Endothelial cell of umbilical vein (primary cell): ENCODE measurements at regions of chr19 and their contacts with region 1.

Region 1: DNA sequence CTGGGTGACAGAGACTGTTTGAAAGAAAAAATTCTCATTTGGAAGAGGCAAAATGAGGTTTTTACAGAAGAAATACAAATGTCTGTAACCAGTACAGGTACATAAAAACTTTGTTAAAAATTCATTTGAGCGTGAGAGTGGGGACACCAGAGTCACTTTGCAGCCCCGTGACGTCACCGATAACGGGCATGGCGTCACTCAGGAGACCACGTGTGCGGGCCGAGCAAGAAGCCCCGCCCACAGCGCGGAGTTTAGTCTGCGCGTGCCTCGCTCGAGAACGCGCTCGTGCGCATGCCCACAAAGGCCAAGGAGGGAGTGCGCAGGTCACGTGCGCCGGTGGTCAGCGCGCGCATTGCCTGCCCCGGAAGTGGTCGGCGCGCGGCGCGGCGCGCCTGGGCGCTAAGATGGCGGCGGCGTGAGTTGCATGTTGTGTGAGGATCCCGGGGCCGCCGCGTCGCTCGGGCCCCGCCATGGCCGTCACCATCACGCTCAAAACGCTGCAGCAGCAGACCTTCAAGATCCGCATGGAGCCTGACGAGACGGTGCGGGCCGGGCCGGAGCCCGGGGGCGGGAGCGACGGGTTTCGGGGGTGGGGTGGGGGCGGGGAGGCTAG is at the start of gene RAD23A:
- DNase-seq: peak; percentile 99
- H3K4me3 ChIP-seq: peak within 1 kb of the TSS; percentile 72 to 92 (median 72)
- H3K27ac ChIP-seq: peak within 1 kb of the TSS; percentile 76
- H3K4me1 ChIP-seq: peaks cover 18% of the 10 kb centered on the region
- H3K27me3 ChIP-seq: no peaks in the 10 kb centered on the region
- CTCF ChIP-seq: no peak
- POLR2A ChIP-seq: peak; percentile 98
- total RNA-seq, gene RAD23A: 96.7 and 102 TPM in 2 replicates

Region 2: GRCh38 chr19:12956446-12957388 is 11.1 kb after region 1 on chr19 and contains the start of gene GADD45GIP1:
- CTCF ChIA-PET with region 1: no interaction called
- POLR2A ChIA-PET with region 1: interaction called, 7 read pairs
- dilution Hi-C with region 1: no loop called
- intact Hi-C with region 1: loop called (anchors 1 kb)
- DNase-seq: peak; percentile 80
- H3K4me3 ChIP-seq: peak within 1 kb of the TSS; percentile 64 to 81 (median 65)
- H3K27ac ChIP-seq: peak within 1 kb of the TSS; percentile 72
- H3K4me1 ChIP-seq: peaks cover 38% of the 10 kb centered on the region
- H3K27me3 ChIP-seq: no peaks in the 10 kb centered on the region
- CTCF ChIP-seq: no peak
- POLR2A ChIP-seq: peak; percentile 96
- total RNA-seq, gene GADD45GIP1: 32.8 and 36.5 TPM in 2 replicates